ENCODE measurements at regions of chr1 and their contacts with region 1.

Region 1: DNA sequence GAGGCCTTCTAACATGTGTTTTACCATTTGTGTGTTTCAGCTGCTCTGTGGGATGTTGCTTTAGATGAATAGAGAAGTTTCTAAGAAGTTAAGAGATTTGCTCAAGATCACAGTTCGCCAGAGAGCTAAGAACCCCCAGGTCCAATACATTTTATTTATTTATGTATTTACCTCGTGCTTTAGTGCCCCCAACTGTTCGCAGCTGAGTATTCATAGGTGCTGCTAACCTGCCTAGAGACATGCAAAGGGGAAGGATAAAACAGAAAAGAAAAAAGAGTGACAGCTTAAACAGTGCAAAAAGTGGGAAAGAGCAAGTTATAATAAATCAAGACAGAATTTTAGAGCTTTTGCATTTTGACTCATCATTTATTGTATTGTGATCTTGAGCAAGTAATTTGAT is 31.1 kb downstream of the NFYC start:
- DNase-seq: no peak
- ATAC-seq: peak; percentile 39; the same call in 1 of the 3 replicates
- H3K4me3 ChIP-seq: no peak overlapping the region
- H3K27ac ChIP-seq: no peak overlapping the region
- H3K4me1 ChIP-seq: no peaks in the 10 kb centered on the region
- H3K27me3 ChIP-seq: no peaks in the 10 kb centered on the region
- CTCF ChIP-seq: peak in 2 of 3 experiments; percentile 12 to 32; a peak in 1 of 6 replicates
- EP300 ChIP-seq: no peak
- POLR2A ChIP-seq: no peak
- RAD21 ChIP-seq: peak; percentile 55

Region 2: GRCh38 chr1:40612345-40612831 is 110.2 kb before region 1 on chr1:
- CTCF ChIA-PET with region 1: interaction called, 12 read pairs
- POLR2A ChIA-PET with region 1: no interaction called
- RAD21 ChIA-PET with region 1: no interaction called
- SMC1A ChIA-PET with region 1: interaction called, 3 read pairs
- in situ Hi-C with region 1: no loop called
- intact Hi-C with region 1: no loop called
- DNase-seq: peak; percentile 46
- ATAC-seq: peak; percentile 100
- H3K4me3 ChIP-seq: no peak overlapping the region
- H3K27ac ChIP-seq: no peak overlapping the region
- H3K4me1 ChIP-seq: 0 out of 2 replicates have a peak, but pooled peaks cover 3% of the 10 kb centered on the region
- H3K27me3 ChIP-seq: no peaks in the 10 kb centered on the region
- CTCF ChIP-seq: peak; percentile 91 to 97 (median 93)
- EP300 ChIP-seq: no peak
- POLR2A ChIP-seq: no peak
- RAD21 ChIP-seq: peak; percentile 96

Region 3: DNA sequence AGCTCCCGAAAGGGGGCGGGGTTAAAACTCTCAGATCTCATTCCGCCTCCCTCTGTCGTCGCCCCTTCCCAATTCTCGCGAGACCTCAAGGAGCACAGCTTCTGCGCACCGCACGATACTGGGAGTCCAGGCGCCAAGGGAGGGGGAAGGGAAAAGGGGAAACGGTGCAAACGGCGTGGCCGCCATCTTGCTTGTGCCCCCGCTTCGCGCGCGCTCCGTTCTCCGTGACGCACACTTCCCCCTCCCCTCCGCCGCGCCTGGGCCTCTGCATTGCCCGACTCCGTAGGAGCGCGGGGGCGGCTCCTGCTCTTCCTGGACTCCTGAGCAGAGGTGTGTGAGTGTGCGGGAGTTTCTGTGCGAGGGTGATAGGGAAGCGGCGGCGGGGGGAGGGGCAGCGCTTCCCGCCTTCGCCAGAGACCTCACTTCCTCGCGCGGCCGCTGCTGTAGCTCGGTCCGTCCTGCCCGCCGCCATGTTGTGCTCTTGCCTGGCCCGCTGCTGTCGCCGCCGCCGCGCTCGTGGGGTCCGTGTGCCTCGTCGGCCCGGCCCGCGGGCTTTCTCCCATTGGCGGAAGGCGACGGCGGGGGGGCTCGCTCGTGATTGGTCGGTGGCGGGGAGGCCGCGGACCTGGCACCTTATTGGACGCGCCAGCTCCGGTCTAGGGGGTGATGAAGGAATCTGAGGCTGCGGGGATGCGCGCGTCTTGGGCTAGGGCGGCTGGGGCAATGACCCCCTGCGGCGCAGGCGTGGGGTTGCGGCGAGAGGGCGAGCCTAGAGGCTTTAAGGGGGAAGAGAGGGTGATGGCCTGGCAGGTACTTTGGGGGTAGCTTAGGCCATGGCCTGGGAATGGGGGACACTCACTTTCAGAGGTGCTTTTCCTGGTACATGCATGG is 30.9 kb before region 1 on chr1 and contains the start of gene NFYC:
- CTCF ChIA-PET with region 1: interaction called, 10 read pairs
- POLR2A ChIA-PET with region 1: interaction called, 6 read pairs
- RAD21 ChIA-PET with region 1: interaction called, 7 read pairs
- SMC1A ChIA-PET with region 1: interaction called, 20 read pairs
- in situ Hi-C with region 1: no loop called
- intact Hi-C with region 1: no loop called
- DNase-seq: peak; percentile 94
- ATAC-seq: peak; percentile 94
- H3K4me3 ChIP-seq: peak within 1 kb of the TSS; percentile 95
- H3K27ac ChIP-seq: peak within 1 kb of the TSS; percentile 98
- H3K4me1 ChIP-seq: peaks cover 32% of the 10 kb centered on the region
- H3K27me3 ChIP-seq: no peaks in the 10 kb centered on the region
- CTCF ChIP-seq: peak in 1 of 3 experiments; percentile 10; a peak in 1 of 6 replicates
- EP300 ChIP-seq: peak in 1 of 2 experiments; percentile 45; a peak in 2 of 4 replicates
- POLR2A ChIP-seq: peak; percentile 99
- RAD21 ChIP-seq: no peak
- polyA plus RNA-seq, gene NFYC: 4.3 to 6.9 TPM

Region 4: GRCh38 chr1:40709100-40709801 is 13.4 kb before region 1 on chr1:
- CTCF ChIA-PET with region 1: interaction called, 19 read pairs
- POLR2A ChIA-PET with region 1: interaction called, 4 read pairs
- RAD21 ChIA-PET with region 1: interaction called, 8 read pairs
- SMC1A ChIA-PET with region 1: interaction called, 12 read pairs
- in situ Hi-C with region 1: no loop called
- intact Hi-C with region 1: no loop called
- DNase-seq: peak; percentile 96
- ATAC-seq: peak; percentile 96
- H3K4me3 ChIP-seq: peak overlapping the region; percentile 77
- H3K27ac ChIP-seq: peak overlapping the region; percentile 82
- H3K4me1 ChIP-seq: peaks cover 22% of the 10 kb centered on the region
- H3K27me3 ChIP-seq: no peaks in the 10 kb centered on the region
- CTCF ChIP-seq: no peak
- EP300 ChIP-seq: no peak
- POLR2A ChIP-seq: peak; percentile 68
- RAD21 ChIP-seq: no peak

Region 5: GRCh38 chr1:40763742-40764532 is 41.3 kb after region 1 on chr1:
- CTCF ChIA-PET with region 1: interaction called, 5 read pairs
- POLR2A ChIA-PET with region 1: no interaction called
- RAD21 ChIA-PET with region 1: interaction called, 11 read pairs
- SMC1A ChIA-PET with region 1: interaction called, 7 read pairs
- in situ Hi-C with region 1: no loop called
- intact Hi-C with region 1: no loop called
- DNase-seq: peak; percentile 62
- ATAC-seq: peak; percentile 76
- H3K4me3 ChIP-seq: peak overlapping the region; percentile 53
- H3K27ac ChIP-seq: peak overlapping the region; percentile 85
- H3K4me1 ChIP-seq: peaks cover 42% of the 10 kb centered on the region
- H3K27me3 ChIP-seq: no peaks in the 10 kb centered on the region
- CTCF ChIP-seq: no peak
- EP300 ChIP-seq: peak; percentile 48 to 54; a peak in 1 of 4 replicates
- POLR2A ChIP-seq: no peak
- RAD21 ChIP-seq: no peak

Region 6: DNA sequence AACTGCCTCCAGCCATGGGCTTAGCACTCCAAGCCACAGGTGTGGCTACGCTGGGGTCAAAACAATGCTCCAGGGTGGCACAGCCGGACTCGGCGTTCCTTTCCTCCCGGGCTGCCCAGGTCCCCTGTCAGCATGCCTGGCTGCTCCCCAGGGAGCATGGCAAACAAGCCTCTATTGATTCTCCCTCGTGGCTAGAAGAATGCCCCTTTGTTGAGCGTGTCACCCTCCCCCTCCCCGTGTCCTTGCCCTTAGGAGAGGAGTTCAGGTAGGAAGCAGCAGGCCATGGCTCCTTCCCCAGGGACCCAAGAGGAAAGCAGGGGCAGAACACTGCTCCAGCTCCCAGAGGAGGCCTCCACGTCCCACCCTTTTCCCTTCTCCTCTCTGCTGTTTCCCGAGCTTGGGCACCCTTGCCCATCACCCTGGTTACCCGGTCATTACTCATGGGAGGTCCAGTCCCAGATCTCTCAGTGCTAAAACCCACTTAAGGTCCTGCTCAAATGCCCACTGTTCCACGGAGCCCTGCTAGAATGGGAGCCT is 196.9 kb after region 1 on chr1:
- CTCF ChIA-PET with region 1: no interaction called
- POLR2A ChIA-PET with region 1: no interaction called
- RAD21 ChIA-PET with region 1: no interaction called
- SMC1A ChIA-PET with region 1: no interaction called
- in situ Hi-C with region 1: no loop called
- intact Hi-C with region 1: no loop called
- DNase-seq: no peak
- ATAC-seq: no peak
- H3K4me3 ChIP-seq: no peak overlapping the region
- H3K27ac ChIP-seq: no peak overlapping the region
- H3K4me1 ChIP-seq: no peaks in the 10 kb centered on the region
- H3K27me3 ChIP-seq: no peaks in the 10 kb centered on the region
- CTCF ChIP-seq: no peak
- EP300 ChIP-seq: no peak
- POLR2A ChIP-seq: no peak
- RAD21 ChIP-seq: no peak

Measured in GM12878 (cell line).